GM18951 (cell line): ENCODE measurements at regions of chr1 and their contacts with region 1.

Region 1: GRCh38 chr1:15803354-15803753 is 4.1 kb downstream of the UQCRHL start:
- POLR2A ChIP-seq: no peak

Region 2: DNA sequence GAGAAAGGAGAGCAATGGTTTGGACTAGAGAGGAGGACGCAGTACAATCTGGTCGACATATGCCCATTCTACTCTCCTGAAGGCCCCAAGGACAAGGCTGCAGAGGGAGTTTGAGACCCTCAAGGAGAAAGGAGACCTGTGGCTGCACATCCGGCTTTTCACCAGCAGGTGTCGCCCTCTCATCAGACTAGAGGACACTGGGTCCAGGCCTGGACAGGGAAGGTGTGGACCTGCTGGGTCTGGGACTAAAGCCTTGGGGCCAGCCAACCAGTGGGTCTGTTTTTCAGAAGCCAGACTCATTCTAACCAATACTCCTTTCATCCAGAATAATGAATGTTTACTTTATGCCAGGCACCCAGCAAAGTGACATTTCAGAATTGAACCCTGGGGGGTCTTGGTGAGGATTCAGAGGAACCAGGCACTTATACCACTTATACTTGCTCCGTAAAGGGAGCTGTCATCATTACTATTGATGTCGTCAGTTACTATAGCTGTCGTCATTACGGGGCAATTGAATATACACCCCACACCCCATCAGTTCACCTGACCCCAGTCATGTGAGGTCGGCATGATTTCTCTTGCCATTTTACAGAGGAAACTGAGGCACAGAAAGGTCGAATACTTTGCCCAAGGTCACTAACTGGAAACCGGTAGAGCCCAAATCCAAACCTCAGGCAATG is 205.8 kb after region 1 on chr1:
- in situ Hi-C with region 1: loop called (anchors 10 kb)
- POLR2A ChIP-seq: no peak